ENCODE measurements at regions of chr17 and their contacts with region 1.

Region 1: GRCh38 chr17:47615766-47616424 is 33.8 kb upstream of the KPNB1 start:
- DNase-seq: peak; percentile 16
- ATAC-seq: peak; percentile 83
- H3K4me3 ChIP-seq: no peak overlapping the region
- H3K27ac ChIP-seq: no peak overlapping the region
- H3K4me1 ChIP-seq: no peaks in the 10 kb centered on the region
- H3K27me3 ChIP-seq: no peaks in the 10 kb centered on the region
- CTCF ChIP-seq: peak; percentile 38 to 63 (median 61); a peak in 5 of 6 replicates
- EP300 ChIP-seq: no peak
- POLR2A ChIP-seq: no peak
- RAD21 ChIP-seq: peak; percentile 71

Region 2: DNA sequence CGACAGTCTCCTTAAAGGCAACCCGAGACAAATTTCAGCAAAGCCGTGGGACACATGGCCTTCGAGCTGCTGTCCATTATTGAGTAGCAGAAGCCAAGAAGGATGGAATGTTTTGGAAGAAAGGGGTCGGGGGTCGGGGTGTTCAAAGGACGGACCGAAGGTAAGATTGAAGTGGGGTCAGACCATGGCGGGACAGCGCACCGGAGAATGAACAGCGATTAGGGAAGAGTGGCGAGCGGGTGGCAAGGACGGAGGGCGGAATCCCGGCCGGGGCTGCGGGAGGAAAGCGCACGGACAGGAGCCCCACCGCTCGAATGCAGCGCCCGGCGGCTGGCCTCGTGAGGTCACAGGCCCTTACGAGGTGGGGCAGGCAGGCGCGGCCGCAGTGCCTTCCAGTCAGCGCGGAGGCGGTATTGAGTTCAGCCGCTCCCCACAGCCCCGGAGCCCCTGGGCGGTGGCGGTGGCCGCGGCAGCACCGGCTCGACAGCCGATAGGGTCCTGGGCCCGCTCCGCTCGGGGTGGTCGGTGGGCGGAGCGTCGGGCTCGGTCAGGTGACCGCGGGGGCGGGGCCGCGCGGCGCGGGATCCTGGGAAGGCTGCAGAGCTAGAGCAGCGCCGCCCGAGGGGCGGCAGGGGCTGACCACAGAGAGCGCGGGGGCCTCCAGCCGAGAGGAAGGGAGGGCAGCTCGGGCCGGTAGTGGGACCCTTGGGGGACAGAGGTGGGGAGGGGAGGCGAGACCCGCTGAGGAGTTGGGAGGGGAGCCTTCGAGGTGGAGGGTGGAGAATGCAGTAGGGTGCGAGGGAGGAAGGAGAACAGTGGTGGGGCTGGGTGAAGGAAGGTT is 292.3 kb before region 1 on chr17 and contains the start of gene EFCAB13:
- CTCF ChIA-PET with region 1: interaction called, 5 read pairs
- POLR2A ChIA-PET with region 1: interaction called, 4 read pairs
- RAD21 ChIA-PET with region 1: interaction called, 4 read pairs
- SMC1A ChIA-PET with region 1: interaction called, 7 read pairs
- in situ Hi-C with region 1: loop called (anchors 10 kb)
- intact Hi-C with region 1: loop called (anchors 5 kb)
- DNase-seq: peak; percentile 54
- ATAC-seq: peak; percentile 95
- H3K4me3 ChIP-seq: peak within 1 kb of the TSS; percentile 76
- H3K27ac ChIP-seq: peak within 1 kb of the TSS; percentile 91
- H3K4me1 ChIP-seq: peaks cover 10% of the 10 kb centered on the region; the same call in 1 of the 2 replicates
- H3K27me3 ChIP-seq: no peaks in the 10 kb centered on the region
- CTCF ChIP-seq: 0 out of 6 replicates have a peak, but pooled peaks of 1 of the 3 experiments have one; percentile 17
- EP300 ChIP-seq: no peak; a peak in 1 of 4 replicates
- POLR2A ChIP-seq: peak; percentile 92
- RAD21 ChIP-seq: no peak
- polyA plus RNA-seq, gene EFCAB13: 0.90 to 1.9 TPM

Region 3: GRCh38 chr17:47363171-47363570 is 252.7 kb before region 1 on chr17:
- CTCF ChIA-PET with region 1: interaction called, 21 read pairs
- POLR2A ChIA-PET with region 1: no interaction called
- RAD21 ChIA-PET with region 1: interaction called, 5 read pairs
- SMC1A ChIA-PET with region 1: interaction called, 5 read pairs
- in situ Hi-C with region 1: no loop called
- intact Hi-C with region 1: loop called (anchors 5 kb)
- DNase-seq: no peak
- ATAC-seq: no peak
- H3K4me3 ChIP-seq: no peak overlapping the region
- H3K27ac ChIP-seq: no peak overlapping the region
- H3K4me1 ChIP-seq: no peaks in the 10 kb centered on the region
- H3K27me3 ChIP-seq: no peaks in the 10 kb centered on the region
- CTCF ChIP-seq: no peak
- EP300 ChIP-seq: no peak
- POLR2A ChIP-seq: no peak
- RAD21 ChIP-seq: no peak

Region 4: DNA sequence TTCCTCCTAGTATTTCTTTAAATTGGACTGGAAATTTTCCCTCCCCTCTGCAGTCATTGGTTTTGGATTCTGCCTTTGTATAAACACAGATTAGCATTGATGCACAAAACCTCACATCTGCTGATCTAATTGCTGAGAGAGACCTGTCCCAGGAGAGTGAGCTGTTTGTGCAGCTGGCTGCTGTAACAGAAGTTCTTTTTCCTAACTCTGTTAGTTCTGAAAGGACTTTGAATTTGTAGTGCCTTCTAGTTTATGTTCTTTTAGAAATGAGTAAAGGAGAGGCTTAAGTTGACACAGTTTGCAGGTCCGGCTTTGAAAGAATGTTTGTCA is 11.3 kb before region 1 on chr17:
- CTCF ChIA-PET with region 1: interaction called, 22 read pairs
- POLR2A ChIA-PET with region 1: interaction called, 4 read pairs
- RAD21 ChIA-PET with region 1: interaction called, 3 read pairs
- SMC1A ChIA-PET with region 1: interaction called, 10 read pairs
- in situ Hi-C with region 1: no loop called
- intact Hi-C with region 1: no loop called
- DNase-seq: no peak
- ATAC-seq: no peak
- H3K4me3 ChIP-seq: no peak overlapping the region
- H3K27ac ChIP-seq: no peak overlapping the region
- H3K4me1 ChIP-seq: no peaks in the 10 kb centered on the region
- H3K27me3 ChIP-seq: no peaks in the 10 kb centered on the region; a peak in 1 of 4 replicates
- CTCF ChIP-seq: no peak
- EP300 ChIP-seq: no peak
- POLR2A ChIP-seq: no peak
- RAD21 ChIP-seq: no peak

Region 5: GRCh38 chr17:47882247-47882646 is 266.4 kb after region 1 on chr17:
- CTCF ChIA-PET with region 1: no interaction called
- POLR2A ChIA-PET with region 1: no interaction called
- RAD21 ChIA-PET with region 1: no interaction called
- SMC1A ChIA-PET with region 1: no interaction called
- in situ Hi-C with region 1: no loop called
- intact Hi-C with region 1: no loop called
- DNase-seq: no peak
- ATAC-seq: no peak
- H3K4me3 ChIP-seq: no peak overlapping the region
- H3K27ac ChIP-seq: no peak overlapping the region
- H3K4me1 ChIP-seq: no peaks in the 10 kb centered on the region
- H3K27me3 ChIP-seq: peaks cover 3 to 4% of the 10 kb centered on the region in 2 experiments; a peak in 3 of 4 replicates
- CTCF ChIP-seq: no peak
- EP300 ChIP-seq: no peak
- POLR2A ChIP-seq: no peak
- RAD21 ChIP-seq: no peak

Measured in GM12878 (cell line).